IMR-90 (cell line): ENCODE measurements at regions of chr4 and their contacts with region 1.

Region 1: DNA sequence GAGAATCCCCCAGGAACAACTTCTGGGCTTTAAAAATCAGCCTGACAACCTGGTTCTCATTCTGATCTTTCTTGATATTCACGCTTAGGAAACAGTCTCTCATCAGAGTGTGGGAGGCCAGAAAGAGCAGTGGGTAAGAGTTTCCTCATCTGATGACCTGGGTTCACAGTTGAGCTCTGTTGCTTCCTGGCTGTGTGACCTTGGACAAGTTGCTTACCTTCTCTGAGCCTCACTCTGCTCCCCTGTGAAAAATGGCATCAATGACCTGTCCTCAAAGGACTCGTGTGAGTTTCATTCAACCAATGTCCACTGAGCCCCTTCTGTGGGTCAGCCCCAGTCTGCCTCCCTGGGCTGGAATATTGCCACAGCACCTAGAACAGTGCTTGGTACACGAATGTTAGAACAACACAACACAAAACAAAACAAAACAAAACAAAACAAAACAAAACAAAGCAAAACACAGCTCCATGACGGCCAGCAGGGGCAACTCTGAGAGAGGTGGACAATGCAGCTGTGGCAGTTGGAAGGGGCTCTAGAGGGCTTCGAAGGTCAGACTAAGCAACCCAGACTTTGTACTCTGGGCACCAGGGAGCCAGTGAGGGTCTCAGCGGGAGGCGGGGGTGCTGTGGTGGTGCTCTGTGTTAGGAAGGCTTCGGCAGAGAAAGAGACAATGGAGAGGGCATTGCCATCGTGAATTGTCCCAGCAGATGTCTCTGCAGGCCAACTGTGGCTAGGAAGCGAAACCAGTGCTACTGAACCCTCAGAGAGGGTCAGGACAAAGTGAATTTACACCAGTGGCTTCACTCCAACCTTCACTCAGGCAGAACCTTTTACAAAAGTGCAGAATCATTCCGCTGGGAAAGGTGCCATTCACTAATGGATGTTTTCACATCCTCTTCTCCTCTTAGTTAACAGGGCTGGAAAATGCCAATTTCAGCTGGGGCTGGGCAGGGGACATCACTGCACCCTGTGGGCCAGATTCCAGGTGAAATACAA is 14.3 kb upstream of the C4orf50 start:
- DNase-seq: no peak
- ATAC-seq: no peak
- H3K4me3 ChIP-seq: no peak overlapping the region
- H3K27ac ChIP-seq: no peak overlapping the region
- H3K4me1 ChIP-seq: no peaks in the 10 kb centered on the region
- H3K27me3 ChIP-seq: no peaks in the 10 kb centered on the region
- CTCF ChIP-seq: no peak
- POLR2A ChIP-seq: no peak
- RAD21 ChIP-seq: no peak

Region 2: DNA sequence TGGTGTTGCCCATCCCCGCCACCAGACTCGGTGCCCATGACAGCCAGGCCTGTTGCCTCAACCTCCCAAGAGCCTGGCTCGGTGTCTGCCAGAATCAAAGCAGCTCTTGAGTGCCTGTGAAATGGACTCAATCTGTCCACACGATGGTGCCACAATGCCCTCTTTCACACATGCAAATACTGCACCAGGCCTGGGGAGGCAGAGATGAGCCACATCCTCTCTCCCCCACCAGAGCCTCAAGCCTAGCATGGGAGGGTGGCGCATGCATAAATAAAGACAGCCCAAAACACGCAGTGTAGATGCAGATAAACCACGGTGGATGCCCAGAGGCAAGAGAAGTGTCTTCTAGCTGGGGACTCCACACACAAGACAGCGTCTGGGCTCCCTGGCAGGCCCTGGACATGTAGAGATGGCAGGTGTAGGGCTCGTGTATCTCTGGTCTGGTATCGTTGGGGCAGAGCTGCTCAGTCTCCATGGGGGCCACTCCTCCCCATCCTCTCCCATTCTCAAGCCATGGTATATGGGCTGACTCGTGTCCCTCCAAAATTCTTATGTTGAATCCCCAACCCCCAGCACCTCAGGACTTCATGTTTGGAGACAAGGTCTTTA is 102.2 kb after region 1 on chr4:
- CTCF ChIA-PET with region 1: no interaction called
- POLR2A ChIA-PET with region 1: no interaction called
- dilution Hi-C with region 1: no loop called
- in situ Hi-C with region 1: loop called (anchors 25 kb)
- intact Hi-C with region 1: no loop called
- DNase-seq: no peak
- ATAC-seq: no peak
- H3K4me3 ChIP-seq: no peak overlapping the region
- H3K27ac ChIP-seq: no peak overlapping the region
- H3K4me1 ChIP-seq: no peaks in the 10 kb centered on the region
- H3K27me3 ChIP-seq: no peaks in the 10 kb centered on the region
- CTCF ChIP-seq: no peak
- POLR2A ChIP-seq: no peak
- RAD21 ChIP-seq: no peak

Region 3: GRCh38 chr4:6446538-6447451 is 414.2 kb after region 1 on chr4:
- CTCF ChIA-PET with region 1: no interaction called
- POLR2A ChIA-PET with region 1: no interaction called
- dilution Hi-C with region 1: no loop called
- in situ Hi-C with region 1: loop called (anchors 25 kb)
- intact Hi-C with region 1: no loop called
- DNase-seq: no peak
- ATAC-seq: no peak
- H3K4me3 ChIP-seq: no peak overlapping the region
- H3K27ac ChIP-seq: no peak overlapping the region
- H3K4me1 ChIP-seq: no peaks in the 10 kb centered on the region
- H3K27me3 ChIP-seq: peaks cover 18% of the 10 kb centered on the region; the same call in 1 of the 2 replicates
- CTCF ChIP-seq: no peak
- POLR2A ChIP-seq: no peak
- RAD21 ChIP-seq: no peak

Region 4: GRCh38 chr4:6574747-6575502 is 542.4 kb after region 1 on chr4 and contains the start of gene MAN2B2:
- CTCF ChIA-PET with region 1: no interaction called
- POLR2A ChIA-PET with region 1: no interaction called
- dilution Hi-C with region 1: no loop called
- in situ Hi-C with region 1: no loop called
- intact Hi-C with region 1: no loop called
- DNase-seq: peak; percentile 63
- ATAC-seq: peak; percentile 100
- H3K4me3 ChIP-seq: peak within 1 kb of the TSS; percentile 90
- H3K27ac ChIP-seq: peak within 1 kb of the TSS; percentile 74
- H3K4me1 ChIP-seq: peaks cover 8% of the 10 kb centered on the region; the same call in 1 of the 2 replicates
- H3K27me3 ChIP-seq: peaks cover 14% of the 10 kb centered on the region
- CTCF ChIP-seq: 0 out of 2 replicates have a peak, but pooled peaks have one; percentile 7
- POLR2A ChIP-seq: peak; percentile 62
- RAD21 ChIP-seq: 0 out of 2 replicates have a peak, but pooled peaks have one; percentile 12
- total RNA-seq, gene MAN2B2: 11.9 and 13.4 TPM in 2 replicates